ENCODE measurements at regions of chr19 and their contacts with region 1.

Region 1: GRCh38 chr19:7340959-7341837 is 7.5 kb upstream of the ARHGEF18 start:
- ATAC-seq: peak; percentile 34 to 76 (median 64)
- H3K4me3 ChIP-seq: no peak overlapping the region
- H3K27ac ChIP-seq: no peak overlapping the region
- H3K4me1 ChIP-seq: no peaks in the 10 kb centered on the region

Region 2: GRCh38 chr19:6460101-6460853 is 880.9 kb before region 1 on chr19:
- in situ Hi-C with region 1: no loop called
- ATAC-seq: peak; percentile 86 to 89 (median 88)
- H3K4me3 ChIP-seq: peak overlapping the region; percentile 52 to 86 (median 66)
- H3K27ac ChIP-seq: peak overlapping the region in 1 of 2 donors; percentile 37
- H3K4me1 ChIP-seq: peaks cover 2 to 3% of the 10 kb centered on the region in 2 donors

Region 3: DNA sequence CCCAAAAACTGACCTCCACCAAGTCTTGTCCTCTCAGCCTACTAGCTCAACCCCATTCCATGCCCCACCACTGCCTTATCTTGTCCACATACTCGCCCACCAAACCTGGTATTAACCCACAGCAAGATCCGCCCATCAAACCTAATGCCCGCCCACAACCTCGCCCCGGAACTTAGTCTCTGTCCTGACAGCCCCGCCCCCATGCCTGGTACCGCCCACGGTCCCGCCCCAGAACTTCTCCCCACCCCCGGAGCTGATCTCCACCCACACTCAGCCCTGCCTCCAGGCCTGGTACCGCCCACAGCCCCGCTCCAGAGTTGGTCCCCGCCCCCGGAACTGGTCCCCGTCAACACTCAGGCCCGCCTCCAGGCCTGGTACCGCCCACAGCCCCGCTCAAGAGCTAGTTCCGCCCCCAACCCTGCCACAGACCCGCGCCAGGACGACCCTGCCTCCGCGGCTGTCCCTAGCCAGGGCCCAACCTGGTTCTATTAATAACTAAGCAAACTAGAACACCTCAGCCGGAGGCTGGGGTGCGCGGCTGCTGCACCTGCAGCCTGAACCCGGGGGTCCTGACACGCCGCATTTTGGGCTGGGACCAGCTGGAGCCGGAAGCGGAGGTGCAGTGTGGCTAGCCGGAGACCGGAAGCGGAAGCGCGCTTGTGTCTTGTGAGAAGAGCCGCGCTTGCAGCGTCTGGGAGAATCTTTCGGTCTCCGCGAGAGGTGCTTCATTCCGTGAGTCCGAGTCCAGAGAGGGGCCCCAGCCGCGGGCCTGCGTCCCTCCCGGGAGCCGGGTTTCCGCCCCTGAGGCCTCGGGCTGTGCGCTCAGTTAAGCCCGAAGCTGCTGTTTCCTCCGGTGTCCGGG is 271.9 kb before region 1 on chr19 and contains the start of gene ZNF557:
- in situ Hi-C with region 1: no loop called
- ATAC-seq: peak; percentile 94 to 99 (median 98)
- H3K4me3 ChIP-seq: peak within 1 kb of the TSS; percentile 59 to 97 (median 92)
- H3K27ac ChIP-seq: peak within 1 kb of the TSS; percentile 91 to 96
- H3K4me1 ChIP-seq: peaks cover 0 to 7% of the 10 kb centered on the region in 2 donors
- total RNA-seq, gene ZNF557: 8.4 to 16.1 (median 10.8) TPM

Region 4: DNA sequence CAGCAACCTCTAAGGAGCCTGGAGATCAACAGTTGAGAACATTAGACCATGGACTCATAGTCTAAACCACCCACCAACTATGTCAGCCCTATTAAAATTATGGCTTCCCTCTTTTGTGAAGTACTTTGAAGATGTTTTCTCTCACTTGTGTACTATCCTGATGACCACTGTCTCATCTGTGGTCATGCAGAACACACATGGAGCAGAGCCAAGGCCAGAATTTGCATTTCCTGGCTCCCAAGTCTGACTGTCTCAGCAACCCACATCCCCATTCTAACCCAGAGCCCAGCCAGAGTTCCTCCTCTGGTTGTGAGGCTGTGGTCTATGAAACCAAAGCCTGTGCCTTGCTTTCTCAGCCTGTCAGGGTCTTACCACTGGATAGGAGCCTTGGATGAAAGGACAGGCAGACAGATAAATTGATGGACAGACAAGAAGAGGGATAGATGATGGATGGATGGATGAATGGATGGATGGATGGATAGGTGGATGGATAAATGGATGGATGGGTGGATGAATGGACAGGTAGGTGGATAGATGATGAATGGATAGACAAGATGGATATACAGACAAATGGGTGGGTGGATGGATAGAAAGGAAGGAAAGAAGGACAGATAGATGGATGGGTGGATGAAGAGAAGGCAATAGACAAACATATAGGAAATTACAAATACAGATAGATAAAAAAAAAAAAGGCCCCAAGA is 236.3 kb before region 1 on chr19:
- in situ Hi-C with region 1: loop called in 3 of 9 experiments (anchors 10 to 25 kb)
- ATAC-seq: peak in 1 of 8 experiments; percentile 74
- H3K4me3 ChIP-seq: no peak overlapping the region
- H3K27ac ChIP-seq: no peak overlapping the region
- H3K4me1 ChIP-seq: peaks cover under 1 to 2% of the 10 kb centered on the region in 2 donors

Region 5: DNA sequence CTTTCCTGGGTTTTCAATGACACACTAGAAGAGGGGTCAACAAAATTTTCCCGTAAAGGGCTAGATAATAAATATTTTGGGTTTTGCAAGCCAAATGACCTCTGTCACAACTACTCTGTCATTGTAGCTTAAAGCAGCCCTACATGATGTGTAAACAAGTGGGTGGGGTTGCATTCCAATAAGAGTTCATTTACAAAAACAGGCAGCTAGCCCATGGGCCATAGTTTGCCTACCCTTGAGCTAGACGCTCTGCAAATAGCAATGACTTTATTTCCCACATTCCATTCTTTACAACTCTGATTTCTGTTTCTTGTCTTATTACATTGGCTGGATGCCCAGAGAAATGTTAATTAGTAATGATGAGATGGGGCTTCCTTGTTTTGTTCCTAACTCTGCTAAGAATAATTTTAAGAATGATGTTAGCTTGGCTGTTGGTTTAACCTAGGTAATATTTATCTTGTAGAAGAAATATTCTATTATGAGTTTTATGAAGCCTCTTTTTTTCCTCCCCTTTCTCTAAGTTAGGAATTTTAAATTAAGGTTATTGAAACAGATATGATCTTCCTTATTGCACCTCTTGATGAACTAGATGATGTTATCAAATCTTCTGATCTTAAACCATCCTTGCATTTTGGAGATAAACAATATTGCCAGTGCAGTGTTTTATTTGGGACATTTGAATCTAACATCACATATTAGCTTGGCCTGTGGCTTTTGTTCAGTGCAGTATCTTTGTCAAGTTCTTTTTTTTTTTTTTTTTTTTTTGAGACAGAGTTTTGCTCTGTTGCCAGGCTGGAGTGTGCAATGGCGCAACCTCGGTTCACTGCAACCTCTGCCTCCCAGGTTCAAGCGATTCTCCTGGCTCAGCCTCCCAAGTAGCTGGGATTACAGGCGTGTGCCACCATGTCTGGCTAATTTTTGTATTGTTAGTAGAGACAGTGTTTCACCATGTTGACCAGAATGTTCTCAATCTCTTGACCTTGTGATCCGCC is 195.4 kb before region 1 on chr19:
- in situ Hi-C with region 1: loop called in 2 of 9 experiments (anchors 25 kb)
- ATAC-seq: peak in 3 of 8 experiments; percentile 82 to 99 (median 99)
- H3K4me3 ChIP-seq: no peak overlapping the region
- H3K27ac ChIP-seq: no peak overlapping the region
- H3K4me1 ChIP-seq: no peaks in the 10 kb centered on the region